HEK293 (cell line): ENCODE measurements at regions of chr1 and their contacts with region 1.

Region 1: DNA sequence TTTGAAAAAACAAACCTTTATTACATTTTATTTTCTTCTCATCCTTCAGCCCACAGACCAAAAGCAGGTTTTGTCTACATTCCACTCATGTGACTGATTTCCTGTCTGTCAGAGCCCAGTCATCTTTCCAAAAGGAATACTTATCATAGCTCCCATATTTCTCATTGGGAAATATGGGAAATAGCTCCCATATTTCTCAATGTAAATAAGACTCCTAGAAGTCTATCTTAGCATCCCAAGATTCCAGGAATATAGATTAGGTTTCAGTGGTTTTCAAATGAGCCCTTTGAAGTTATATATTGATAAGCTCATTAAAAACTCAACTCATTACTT is 19.1 kb upstream of the NRDC start:
- H3K4me3 ChIP-seq: no peak overlapping the region
- H3K27ac ChIP-seq: no peak overlapping the region
- H3K4me1 ChIP-seq: no peaks in the 10 kb centered on the region
- CTCF ChIP-seq: no peak

Region 2: DNA sequence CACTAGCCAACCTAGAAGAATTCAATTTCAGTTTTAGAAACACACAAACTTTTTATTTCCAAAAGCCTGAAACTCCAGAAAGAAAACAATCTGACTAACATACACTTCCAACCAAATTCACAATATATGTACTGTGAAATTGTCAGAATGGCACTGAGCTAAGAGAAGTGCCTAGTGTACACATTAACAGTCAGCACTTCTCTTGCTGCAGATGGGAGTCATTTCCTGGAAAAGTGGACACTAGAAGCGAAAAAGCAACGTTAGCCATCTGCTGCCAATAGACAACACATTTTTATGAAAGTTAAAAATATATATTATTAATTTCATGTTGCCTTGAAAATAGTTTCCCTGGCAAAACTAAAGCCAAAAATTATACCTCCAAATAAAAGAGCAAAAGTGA is 444.7 kb before region 1 on chr1:
- CTCF ChIA-PET with region 1: no interaction called
- POLR2A ChIA-PET with region 1: no interaction called
- H3K4me3 ChIP-seq: no peak overlapping the region
- H3K27ac ChIP-seq: no peak overlapping the region
- H3K4me1 ChIP-seq: no peaks in the 10 kb centered on the region
- CTCF ChIP-seq: no peak

Region 3: DNA sequence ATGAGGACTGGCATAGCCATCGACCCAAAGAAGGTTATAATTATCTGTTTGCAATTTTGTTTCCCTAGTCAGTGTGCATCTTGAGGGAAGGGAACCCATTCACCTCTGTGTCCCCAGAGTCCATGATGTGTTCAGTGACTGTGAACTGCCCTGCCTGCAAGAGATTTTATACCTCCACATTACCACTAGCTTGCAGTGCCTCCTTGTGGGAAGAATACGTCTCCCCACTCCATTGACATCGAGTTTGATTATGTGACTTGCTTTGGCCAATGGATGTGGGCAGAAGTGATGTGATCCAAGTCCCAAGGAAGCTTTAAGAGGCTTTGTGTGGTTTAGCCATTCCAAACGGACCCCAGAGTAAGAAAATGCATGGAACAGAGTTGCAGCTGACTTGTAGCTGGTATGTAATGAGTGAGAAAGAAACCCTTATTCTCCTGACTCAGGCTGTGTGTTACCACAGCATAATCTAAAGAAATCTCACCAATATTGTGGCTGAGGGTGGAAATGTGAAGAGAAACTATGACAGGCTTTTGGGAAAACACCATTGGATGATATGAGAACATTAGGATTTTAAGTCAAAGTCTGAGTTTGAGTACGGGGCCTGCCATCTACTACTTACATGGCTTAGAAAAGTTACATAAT is 28.6 kb after region 1 on chr1:
- CTCF ChIA-PET with region 1: interaction called, 21 read pairs
- POLR2A ChIA-PET with region 1: no interaction called
- H3K4me3 ChIP-seq: no peak overlapping the region
- H3K27ac ChIP-seq: no peak overlapping the region
- H3K4me1 ChIP-seq: no peaks in the 10 kb centered on the region
- CTCF ChIP-seq: peak; percentile 53; the same call in 1 of the 2 replicates

Region 4: GRCh38 chr1:52002038-52002917 is 104.6 kb after region 1 on chr1:
- CTCF ChIA-PET with region 1: interaction called, 70 read pairs
- POLR2A ChIA-PET with region 1: no interaction called
- H3K4me3 ChIP-seq: no peak overlapping the region
- H3K27ac ChIP-seq: no peak overlapping the region
- H3K4me1 ChIP-seq: no peaks in the 10 kb centered on the region
- CTCF ChIP-seq: peak; percentile 77; the same call in 1 of the 2 replicates